Gastrocnemius medialis (tissue), 4 donors: ENCODE measurements at regions of chr3 and their contacts with region 1.

Region 1: GRCh38 chr3:129399145-129399894 is 29.1 kb downstream of the EFCAB12 start:
- DNase-seq: peak; percentile 75 to 80
- ATAC-seq: peak; percentile 99
- H3K4me3 ChIP-seq: peak overlapping the region; percentile 79 to 98 (median 86)
- H3K27ac ChIP-seq: peak overlapping the region; percentile 84 to 93 (median 88)
- H3K4me1 ChIP-seq: peaks cover 10 to 14% of the 10 kb centered on the region in 2 donors
- H3K27me3 ChIP-seq: no peaks in the 10 kb centered on the region
- CTCF ChIP-seq: peak; percentile 62 to 85 (median 82)
- POLR2A ChIP-seq: no peak

Region 2: GRCh38 chr3:129278439-129278970 is 120.8 kb before region 1 on chr3 and contains the start of gene HMCES:
- in situ Hi-C with region 1: no loop called
- intact Hi-C with region 1: loop called (anchors 2 kb)
- DNase-seq: peak; percentile 88 to 90
- ATAC-seq: peak; percentile 92 to 95
- H3K4me3 ChIP-seq: peak within 1 kb of the TSS; percentile 69 to 91 (median 86)
- H3K27ac ChIP-seq: peak within 1 kb of the TSS; percentile 87 to 94 (median 89)
- H3K4me1 ChIP-seq: peaks cover 19 to 21% of the 10 kb centered on the region in 2 donors
- H3K27me3 ChIP-seq: no peaks in the 10 kb centered on the region
- CTCF ChIP-seq: no peak
- POLR2A ChIP-seq: peak in 1 of 2 donors; percentile 83
- total RNA-seq, gene HMCES: 24.7 to 35.2 (median 29.5) TPM

Region 3: GRCh38 chr3:129428376-129429079 is 29.2 kb after region 1 on chr3 and contains the start of gene EFCAB12:
- in situ Hi-C with region 1: no loop called
- intact Hi-C with region 1: loop called (anchors 2 kb)
- DNase-seq: peak; percentile 88 to 90
- ATAC-seq: peak; percentile 96
- H3K4me3 ChIP-seq: peak within 1 kb of the TSS; percentile 44 to 76 (median 66)
- H3K27ac ChIP-seq: peak within 1 kb of the TSS; percentile 56 to 73 (median 73)
- H3K4me1 ChIP-seq: peaks cover 7 to 11% of the 10 kb centered on the region in 2 donors
- H3K27me3 ChIP-seq: no peaks in the 10 kb centered on the region
- CTCF ChIP-seq: no peak
- POLR2A ChIP-seq: no peak
- total RNA-seq, gene EFCAB12: not detected

Region 4: GRCh38 chr3:129439817-129440617 is 40.7 kb after region 1 on chr3 and contains the starts of genes IFT122 and MBD4:
- in situ Hi-C with region 1: no loop called
- intact Hi-C with region 1: loop called (anchors 2 kb)
- DNase-seq: peak; percentile 96 to 98
- ATAC-seq: peak; percentile 93 to 96
- H3K4me3 ChIP-seq: peak within 1 kb of the TSS; percentile 68 to 89 (median 76)
- H3K27ac ChIP-seq: peak within 1 kb of the TSS; percentile 81 to 92 (median 85)
- H3K4me1 ChIP-seq: peaks cover 28 to 31% of the 10 kb centered on the region in 2 donors
- H3K27me3 ChIP-seq: no peaks in the 10 kb centered on the region
- CTCF ChIP-seq: peak in 1 of 5 experiments; percentile 4
- POLR2A ChIP-seq: peak; percentile 63 to 88
- total RNA-seq, gene IFT122: 4.6 to 16.4 (median 5.9) TPM
- total RNA-seq, gene MBD4: 15.4 to 18.1 (median 16.4) TPM

Region 5: GRCh38 chr3:129461022-129461421 is 61.7 kb after region 1 on chr3:
- in situ Hi-C with region 1: no loop called
- intact Hi-C with region 1: no loop called
- DNase-seq: no peak
- ATAC-seq: no peak
- H3K4me3 ChIP-seq: no peak overlapping the region
- H3K27ac ChIP-seq: no peak overlapping the region
- H3K4me1 ChIP-seq: no peaks in the 10 kb centered on the region
- H3K27me3 ChIP-seq: no peaks in the 10 kb centered on the region
- CTCF ChIP-seq: no peak
- POLR2A ChIP-seq: no peak